Naive thymus-derived CD4-positive, alpha-beta T cell (primary cell): ENCODE measurements at regions of chr2 and their contacts with region 1.

Region 1: DNA sequence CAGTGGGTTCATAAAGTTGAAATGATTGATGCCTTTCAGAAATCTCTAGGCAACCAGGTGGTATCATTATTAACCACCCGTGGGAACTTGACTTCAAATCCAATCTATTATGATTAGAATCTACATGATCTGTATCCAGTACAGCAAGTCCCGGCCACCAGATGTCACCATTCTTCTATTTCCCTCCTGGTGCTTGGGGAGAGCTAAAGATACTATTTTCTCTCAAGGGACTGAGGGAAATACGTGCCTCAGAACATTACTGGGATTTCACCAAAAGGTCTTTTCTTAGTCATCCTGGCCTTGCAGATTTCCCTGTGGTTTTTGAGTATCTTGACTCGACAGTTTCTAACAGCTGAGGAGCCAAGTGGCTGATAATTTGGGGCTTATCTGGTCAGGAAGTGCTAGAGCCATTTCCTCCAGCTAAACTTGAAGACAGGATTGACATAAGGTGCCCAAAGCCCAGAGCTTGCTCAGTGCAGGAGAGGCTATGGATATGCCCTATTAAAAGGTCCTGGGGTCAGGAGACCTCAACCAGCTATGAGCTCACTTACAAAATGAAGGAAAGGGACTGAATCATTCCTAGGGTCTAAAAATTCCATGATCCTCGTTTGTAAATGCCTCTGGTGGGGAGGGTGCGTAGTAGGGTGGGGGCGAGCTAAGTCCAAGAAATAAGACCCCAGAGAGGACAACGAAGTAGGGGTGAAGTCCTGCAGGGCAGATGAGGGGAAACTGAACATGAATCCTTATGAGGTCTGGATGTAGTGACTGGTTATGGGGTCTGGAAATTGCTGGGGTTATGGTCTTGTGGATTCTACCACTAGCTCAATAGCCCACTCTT is 135.4 kb upstream of the MGAT5 start:
- DNase-seq: peak; percentile 37 to 86 (median 79)
- ATAC-seq: peak; percentile 64
- H3K4me3 ChIP-seq: peak overlapping the region; percentile 93
- H3K4me3 Mint-ChIP-seq: peak overlapping the region; percentile 82 to 99 (median 96)
- H3K27ac ChIP-seq: no peak overlapping the region
- H3K27ac Mint-ChIP-seq: peak overlapping the region in 5 of 9 donors; percentile 82 to 99 (median 86)
- H3K4me1 ChIP-seq: peaks cover 15 to 32% of the 10 kb centered on the region in 2 donors
- H3K4me1 Mint-ChIP-seq: peaks cover 30 to 39% (median 35%) of the 10 kb centered on the region in 7 donors
- H3K27me3 ChIP-seq: no peaks in the 10 kb centered on the region
- H3K27me3 Mint-ChIP-seq: peaks cover 0 to 21% (median 0%) of the 10 kb centered on the region in 5 donors

Region 2: GRCh38 chr2:133240501-133241223 is 877.8 kb before region 1 on chr2:
- CTCF ChIA-PET with region 1: no interaction called
- POLR2A ChIA-PET with region 1: no interaction called
- intact Hi-C with region 1: no loop called
- DNase-seq: no peak
- ATAC-seq: no peak
- H3K4me3 ChIP-seq: no peak overlapping the region
- H3K4me3 Mint-ChIP-seq: no peak overlapping the region
- H3K27ac ChIP-seq: no peak overlapping the region
- H3K27ac Mint-ChIP-seq: no peak overlapping the region
- H3K4me1 ChIP-seq: no peaks in the 10 kb centered on the region
- H3K4me1 Mint-ChIP-seq: no peaks in the 10 kb centered on the region
- H3K27me3 ChIP-seq: no peaks in the 10 kb centered on the region
- H3K27me3 Mint-ChIP-seq: no peaks in the 10 kb centered on the region

Region 3: DNA sequence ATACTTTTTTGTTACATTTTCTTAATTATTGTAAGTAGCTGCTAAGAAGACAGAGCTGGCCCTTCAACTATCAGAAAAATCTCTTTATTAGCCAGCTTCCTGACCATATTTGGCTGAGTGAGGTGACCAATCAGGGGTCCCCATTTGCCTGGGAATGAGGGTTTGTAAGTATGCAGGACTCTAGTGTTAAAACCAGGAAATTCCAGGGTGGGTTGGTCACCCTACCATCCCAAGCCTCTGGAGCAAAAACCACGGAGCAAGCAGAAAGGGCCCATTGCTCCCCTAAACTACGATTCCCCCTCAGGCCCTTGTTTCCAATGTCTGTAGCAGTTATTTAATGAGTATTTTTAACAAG is 384.6 kb before region 1 on chr2:
- CTCF ChIA-PET with region 1: no interaction called
- POLR2A ChIA-PET with region 1: no interaction called
- intact Hi-C with region 1: no loop called
- DNase-seq: no peak
- ATAC-seq: no peak
- H3K4me3 ChIP-seq: no peak overlapping the region
- H3K4me3 Mint-ChIP-seq: no peak overlapping the region
- H3K27ac ChIP-seq: no peak overlapping the region
- H3K27ac Mint-ChIP-seq: no peak overlapping the region
- H3K4me1 ChIP-seq: no peaks in the 10 kb centered on the region
- H3K4me1 Mint-ChIP-seq: peaks cover 0 to 1% (median 0%) of the 10 kb centered on the region in 7 donors
- H3K27me3 ChIP-seq: no peaks in the 10 kb centered on the region
- H3K27me3 Mint-ChIP-seq: peaks cover 0 to 4% (median 0%) of the 10 kb centered on the region in 5 donors

Region 4: DNA sequence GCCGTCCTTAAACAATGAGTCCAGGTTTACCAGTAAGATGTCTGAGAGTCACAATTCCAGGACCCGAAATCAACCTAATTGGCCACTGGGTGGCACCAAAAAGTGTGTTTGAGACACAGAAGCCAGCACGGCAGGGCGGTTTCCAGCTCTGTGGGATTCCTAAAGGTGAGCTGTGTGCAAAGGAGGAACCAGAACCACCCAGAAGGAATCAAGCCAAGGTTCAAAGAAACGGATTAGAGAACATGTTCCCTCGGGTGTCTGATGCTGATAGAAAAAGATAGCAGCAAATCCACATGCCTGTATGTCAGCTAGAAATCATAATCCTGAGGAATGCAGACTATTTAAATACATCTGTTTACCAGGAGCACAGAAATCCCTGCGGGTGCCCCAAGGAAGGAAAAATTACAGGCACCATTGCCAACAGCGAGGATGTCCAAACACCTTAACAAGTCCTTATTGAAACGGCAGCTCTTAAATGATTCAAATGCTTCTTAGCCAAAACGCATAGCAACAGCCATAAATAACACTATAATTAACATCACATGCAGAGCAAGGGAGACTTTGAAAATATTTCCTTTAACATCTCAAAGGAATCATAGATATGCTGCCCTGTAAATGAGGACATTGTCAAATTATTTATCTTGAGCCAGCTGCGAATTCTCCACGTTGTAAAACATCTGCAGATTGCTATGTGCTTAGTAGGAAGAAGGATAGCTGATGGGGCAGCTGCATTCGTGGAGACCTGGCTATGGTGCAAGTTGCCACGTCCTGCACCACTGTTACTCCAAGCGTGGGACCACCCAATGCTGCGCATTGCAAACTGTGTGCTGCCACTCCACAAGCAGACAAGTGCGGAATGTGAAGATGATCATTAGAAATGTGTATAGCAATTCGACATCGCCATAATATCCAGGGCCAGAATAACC is 231.5 kb before region 1 on chr2:
- CTCF ChIA-PET with region 1: interaction called, 3 read pairs
- POLR2A ChIA-PET with region 1: no interaction called
- intact Hi-C with region 1: loop called (anchors 2 to 5 kb)
- DNase-seq: peak in 7 of 9 donors; percentile 11 to 44 (median 33)
- ATAC-seq: no peak
- H3K4me3 ChIP-seq: no peak overlapping the region
- H3K4me3 Mint-ChIP-seq: no peak overlapping the region
- H3K27ac ChIP-seq: no peak overlapping the region
- H3K27ac Mint-ChIP-seq: peak overlapping the region in 1 of 9 donors; percentile 68
- H3K4me1 ChIP-seq: no peaks in the 10 kb centered on the region
- H3K4me1 Mint-ChIP-seq: peaks cover 0 to 2% (median 0%) of the 10 kb centered on the region in 7 donors
- H3K27me3 ChIP-seq: no peaks in the 10 kb centered on the region
- H3K27me3 Mint-ChIP-seq: peaks cover 4 to 12% (median 6%) of the 10 kb centered on the region in 5 donors

Region 5: DNA sequence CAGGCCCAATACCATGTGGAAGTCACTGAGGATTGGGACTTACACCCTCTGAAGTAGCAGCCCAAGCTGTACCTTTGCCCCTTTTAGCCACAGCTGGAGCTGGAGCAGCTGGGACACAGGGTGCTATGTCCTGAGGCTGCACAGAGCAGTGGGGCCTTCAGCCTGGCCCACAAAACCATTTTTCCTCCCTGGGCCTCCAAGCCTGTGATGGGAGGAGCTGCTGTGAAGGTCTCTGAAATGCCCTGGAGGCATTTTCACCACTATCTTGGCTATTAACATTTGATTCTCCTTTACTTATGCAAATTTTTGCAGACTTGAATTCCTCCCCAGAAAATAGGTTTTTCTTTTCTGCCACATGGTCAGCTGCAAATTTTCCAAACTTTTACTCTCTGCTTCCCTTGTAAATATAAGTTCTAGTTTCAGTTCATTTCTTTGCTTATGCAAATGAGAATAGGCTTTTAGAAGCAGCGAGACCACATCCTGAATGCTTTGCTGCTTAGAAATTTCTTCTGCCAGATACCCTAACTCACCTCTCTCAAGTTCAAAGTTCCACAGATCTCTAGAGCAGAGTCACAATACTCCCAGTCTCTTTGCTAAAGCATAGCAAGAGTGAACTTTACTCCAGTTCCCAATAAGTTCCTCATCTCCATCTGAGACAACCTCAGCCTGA is 78.5 kb before region 1 on chr2:
- CTCF ChIA-PET with region 1: no interaction called
- POLR2A ChIA-PET with region 1: no interaction called
- intact Hi-C with region 1: no loop called
- DNase-seq: no peak
- ATAC-seq: no peak
- H3K4me3 ChIP-seq: no peak overlapping the region
- H3K4me3 Mint-ChIP-seq: peak overlapping the region in 1 of 10 donors; percentile 22
- H3K27ac ChIP-seq: no peak overlapping the region
- H3K27ac Mint-ChIP-seq: no peak overlapping the region
- H3K4me1 ChIP-seq: no peaks in the 10 kb centered on the region
- H3K4me1 Mint-ChIP-seq: peaks cover 0 to 8% (median 0%) of the 10 kb centered on the region in 7 donors
- H3K27me3 ChIP-seq: peaks cover 0 to 2% of the 10 kb centered on the region in 2 donors
- H3K27me3 Mint-ChIP-seq: peaks cover 8 to 44% (median 31%) of the 10 kb centered on the region in 5 donors

Region 6: GRCh38 chr2:134218930-134219658 is 100.6 kb after region 1 on chr2:
- CTCF ChIA-PET with region 1: interaction called, 26 read pairs
- POLR2A ChIA-PET with region 1: interaction called, 3 read pairs
- intact Hi-C with region 1: no loop called
- DNase-seq: peak in 8 of 9 donors; percentile 9 to 53 (median 40)
- ATAC-seq: peak; percentile 66
- H3K4me3 ChIP-seq: peak overlapping the region; percentile 27
- H3K4me3 Mint-ChIP-seq: peak overlapping the region; percentile 53 to 81 (median 72)
- H3K27ac ChIP-seq: peak overlapping the region; percentile 38
- H3K27ac Mint-ChIP-seq: peak overlapping the region; percentile 67 to 94 (median 89)
- H3K4me1 ChIP-seq: peaks cover 43 to 47% of the 10 kb centered on the region in 2 donors
- H3K4me1 Mint-ChIP-seq: peaks cover 45 to 72% (median 62%) of the 10 kb centered on the region in 7 donors
- H3K27me3 ChIP-seq: no peaks in the 10 kb centered on the region
- H3K27me3 Mint-ChIP-seq: no peaks in the 10 kb centered on the region

Region 7: DNA sequence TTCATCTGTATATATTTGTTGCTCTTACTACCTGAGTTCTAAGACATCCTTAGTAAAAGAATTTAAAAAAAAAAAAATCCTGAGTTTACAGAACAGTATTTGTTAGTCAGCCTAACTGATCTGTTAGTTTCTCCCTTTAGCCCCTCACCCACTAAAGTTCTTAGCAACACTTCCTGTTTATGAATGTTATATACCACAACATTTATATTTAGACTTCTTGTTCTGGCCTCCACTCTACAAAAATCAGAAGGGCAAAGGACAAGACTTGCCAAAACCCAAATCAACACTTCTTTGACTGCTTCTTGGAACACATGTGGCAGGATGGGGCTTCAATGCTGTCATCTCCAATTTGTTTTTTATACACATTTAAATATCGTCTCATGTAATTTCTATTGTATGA is 206.4 kb after region 1 on chr2:
- CTCF ChIA-PET with region 1: no interaction called
- POLR2A ChIA-PET with region 1: no interaction called
- intact Hi-C with region 1: loop called in 1 of 2 experiments (anchors 2 kb)
- DNase-seq: no peak
- ATAC-seq: peak; percentile 65
- H3K4me3 ChIP-seq: no peak overlapping the region
- H3K4me3 Mint-ChIP-seq: peak overlapping the region in 2 of 10 donors; percentile 11 to 57
- H3K27ac ChIP-seq: no peak overlapping the region
- H3K27ac Mint-ChIP-seq: peak overlapping the region in 3 of 9 donors; percentile 45 to 59 (median 46)
- H3K4me1 ChIP-seq: peaks cover 19 to 29% of the 10 kb centered on the region in 2 donors
- H3K4me1 Mint-ChIP-seq: peaks cover 59 to 73% (median 66%) of the 10 kb centered on the region in 7 donors
- H3K27me3 ChIP-seq: no peaks in the 10 kb centered on the region
- H3K27me3 Mint-ChIP-seq: no peaks in the 10 kb centered on the region

Region 8: GRCh38 chr2:134574611-134575330 is 456.3 kb after region 1 on chr2:
- CTCF ChIA-PET with region 1: no interaction called
- POLR2A ChIA-PET with region 1: no interaction called
- intact Hi-C with region 1: loop called in 1 of 2 experiments (anchors 5 kb)
- DNase-seq: no peak
- ATAC-seq: no peak
- H3K4me3 ChIP-seq: no peak overlapping the region
- H3K4me3 Mint-ChIP-seq: no peak overlapping the region
- H3K27ac ChIP-seq: no peak overlapping the region
- H3K27ac Mint-ChIP-seq: no peak overlapping the region
- H3K4me1 ChIP-seq: no peaks in the 10 kb centered on the region
- H3K4me1 Mint-ChIP-seq: peaks cover 0 to 1% (median 0%) of the 10 kb centered on the region in 7 donors
- H3K27me3 ChIP-seq: no peaks in the 10 kb centered on the region
- H3K27me3 Mint-ChIP-seq: peaks cover 0 to 7% (median 0%) of the 10 kb centered on the region in 5 donors

Region 9: DNA sequence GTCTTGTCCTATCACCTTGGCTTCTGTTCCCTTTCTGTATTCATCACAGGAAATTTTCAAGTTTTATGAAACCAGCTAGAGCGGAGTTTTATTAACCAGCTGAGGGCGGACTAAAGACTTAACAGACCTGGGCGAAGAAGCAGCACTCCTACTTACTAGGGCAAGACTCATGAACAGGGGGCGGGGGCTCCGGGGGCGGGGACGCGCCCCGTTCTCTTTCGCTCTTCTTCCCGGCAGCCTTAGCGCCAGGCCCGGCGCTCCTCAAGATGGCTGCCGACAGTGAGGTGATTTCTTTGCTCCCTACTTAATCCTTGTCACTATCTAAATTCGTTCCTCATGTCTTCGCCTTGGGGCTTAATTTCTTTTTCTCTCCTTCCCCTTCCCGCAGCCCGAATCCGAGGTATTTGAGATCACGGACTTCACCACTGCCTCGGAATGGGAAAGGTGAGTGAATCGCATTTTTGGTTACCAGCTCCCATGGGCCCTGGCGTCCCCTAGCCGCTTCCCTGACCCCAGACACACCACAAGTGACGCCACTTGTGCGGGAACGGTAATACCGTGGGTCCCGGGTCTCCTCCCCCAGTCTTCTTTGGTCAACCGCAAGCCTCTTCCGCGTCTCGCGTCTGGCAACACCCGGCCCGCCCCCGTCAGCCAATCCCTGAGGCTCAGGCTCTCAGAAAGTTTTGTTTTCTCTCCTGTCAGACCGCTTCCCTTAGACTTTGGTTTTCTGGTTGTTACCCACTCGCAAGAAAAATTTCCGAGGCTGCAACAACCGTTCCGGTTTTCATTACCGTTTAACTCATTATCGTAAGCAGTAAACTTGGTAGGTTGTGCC is 933.8 kb after region 1 on chr2 and contains the start of gene RAB3GAP1:
- CTCF ChIA-PET with region 1: no interaction called
- POLR2A ChIA-PET with region 1: no interaction called
- intact Hi-C with region 1: loop called (anchors 2 to 5 kb)
- DNase-seq: peak; percentile 76 to 96 (median 94)
- ATAC-seq: peak; percentile 93
- H3K4me3 ChIP-seq: peak within 1 kb of the TSS; percentile 69
- H3K4me3 Mint-ChIP-seq: peak within 1 kb of the TSS; percentile 94 to 99 (median 97)
- H3K27ac ChIP-seq: peak within 1 kb of the TSS; percentile 99
- H3K27ac Mint-ChIP-seq: peak within 1 kb of the TSS; percentile 98 to 100 (median 99)
- H3K4me1 ChIP-seq: peaks cover 0 to 22% of the 10 kb centered on the region in 2 donors
- H3K4me1 Mint-ChIP-seq: peaks cover 24 to 52% (median 48%) of the 10 kb centered on the region in 7 donors
- H3K27me3 ChIP-seq: no peaks in the 10 kb centered on the region
- H3K27me3 Mint-ChIP-seq: peaks cover 0 to 6% (median 0%) of the 10 kb centered on the region in 5 donors
- total RNA-seq, gene RAB3GAP1: 24.3 to 58.7 (median 42.9) TPM

Region 10: GRCh38 chr2:136107051-136108033 is 1988.8 kb after region 1 on chr2:
- CTCF ChIA-PET with region 1: no interaction called
- POLR2A ChIA-PET with region 1: no interaction called
- intact Hi-C with region 1: no loop called
- DNase-seq: no peak
- ATAC-seq: no peak
- H3K4me3 ChIP-seq: no peak overlapping the region
- H3K4me3 Mint-ChIP-seq: no peak overlapping the region
- H3K27ac ChIP-seq: no peak overlapping the region
- H3K27ac Mint-ChIP-seq: peak overlapping the region in 2 of 9 donors; percentile 1 to 72
- H3K4me1 ChIP-seq: no peaks in the 10 kb centered on the region
- H3K4me1 Mint-ChIP-seq: peaks cover 2 to 19% (median 8%) of the 10 kb centered on the region in 7 donors
- H3K27me3 ChIP-seq: no peaks in the 10 kb centered on the region
- H3K27me3 Mint-ChIP-seq: peaks cover 0 to 4% (median 0%) of the 10 kb centered on the region in 5 donors